H1 (cell line): ENCODE measurements at regions of chr6 and their contacts with region 1.

Region 1: GRCh38 chr6:85678602-85679444 is 36.1 kb upstream of the SYNCRIP start:
- DNase-seq: peak; percentile 97 to 100
- H3K4me3 ChIP-seq: peak overlapping the region; percentile 90 to 100 (median 96)
- H3K27ac ChIP-seq: peak overlapping the region; percentile 97
- H3K4me1 ChIP-seq: peaks cover 0 to 12% (median 2%) of the 10 kb centered on the region in 4 experiments; a peak in 2 of 7 replicates
- H3K27me3 ChIP-seq: no peaks in the 10 kb centered on the region
- CTCF ChIP-seq: no peak
- EP300 ChIP-seq: no peak; a peak in 1 of 3 replicates
- POLR2A ChIP-seq: peak; percentile 100
- RAD21 ChIP-seq: no peak

Region 2: GRCh38 chr6:85449818-85450759 is 228.7 kb before region 1 on chr6 and contains the start of gene NT5E:
- CTCF ChIA-PET with region 1: no interaction called
- POLR2A ChIA-PET with region 1: interaction called, 16 read pairs
- DNase-seq: peak in 1 of 2 experiments; percentile 89
- H3K4me3 ChIP-seq: peak within 1 kb of the TSS; percentile 65 to 80 (median 69)
- H3K27ac ChIP-seq: no peak within 1 kb of the TSS
- H3K4me1 ChIP-seq: no peaks in the 10 kb centered on the region; a peak in 1 of 7 replicates
- H3K27me3 ChIP-seq: peaks cover 10 to 49% (median 40%) of the 10 kb centered on the region in 4 experiments
- CTCF ChIP-seq: peak in 1 of 3 experiments; percentile 7; a peak in 1 of 4 replicates
- EP300 ChIP-seq: no peak
- POLR2A ChIP-seq: peak in 1 of 2 experiments; percentile 49; a peak in 1 of 3 replicates
- RAD21 ChIP-seq: no peak
- total RNA-seq, gene NT5E: 1.1 and 1.5 TPM in 2 replicates

Region 3: GRCh38 chr6:85600713-85601313 is 78.0 kb before region 1 on chr6:
- CTCF ChIA-PET with region 1: no interaction called
- POLR2A ChIA-PET with region 1: interaction called, 55 read pairs
- DNase-seq: no peak
- H3K4me3 ChIP-seq: no peak overlapping the region
- H3K27ac ChIP-seq: no peak overlapping the region
- H3K4me1 ChIP-seq: no peaks in the 10 kb centered on the region
- H3K27me3 ChIP-seq: no peaks in the 10 kb centered on the region
- CTCF ChIP-seq: no peak
- EP300 ChIP-seq: no peak
- POLR2A ChIP-seq: no peak
- RAD21 ChIP-seq: no peak

Region 4: DNA sequence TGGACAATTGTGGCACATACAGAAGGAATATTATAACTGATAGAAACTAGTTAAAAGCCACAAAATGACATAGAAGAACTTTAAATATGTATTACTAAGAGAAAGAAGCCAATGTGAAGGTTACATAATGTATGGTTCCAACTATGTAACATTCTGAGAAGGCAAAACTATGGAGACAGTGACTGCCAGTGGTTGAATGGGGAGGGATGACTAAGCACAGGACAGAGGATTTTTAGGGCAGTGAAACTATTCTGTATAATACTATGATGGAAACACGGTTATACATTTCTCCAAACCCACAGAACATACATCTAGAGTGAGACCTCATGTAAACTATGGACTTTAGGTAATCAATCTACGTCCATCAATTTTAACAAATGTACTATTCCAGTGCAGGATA is 58.5 kb before region 1 on chr6:
- CTCF ChIA-PET with region 1: no interaction called
- POLR2A ChIA-PET with region 1: interaction called, 890 read pairs
- DNase-seq: no peak
- H3K4me3 ChIP-seq: no peak overlapping the region
- H3K27ac ChIP-seq: no peak overlapping the region
- H3K4me1 ChIP-seq: no peaks in the 10 kb centered on the region
- H3K27me3 ChIP-seq: no peaks in the 10 kb centered on the region
- CTCF ChIP-seq: no peak
- EP300 ChIP-seq: no peak
- POLR2A ChIP-seq: no peak
- RAD21 ChIP-seq: no peak

Region 5: GRCh38 chr6:85660181-85660611 is 18.6 kb before region 1 on chr6:
- CTCF ChIA-PET with region 1: no interaction called
- POLR2A ChIA-PET with region 1: interaction called, 339 read pairs
- DNase-seq: no peak
- H3K4me3 ChIP-seq: no peak overlapping the region
- H3K27ac ChIP-seq: no peak overlapping the region
- H3K4me1 ChIP-seq: 0 out of 7 replicates have a peak, but pooled peaks cover 0 to 4% (median 0%) of the 10 kb centered on the region in 4 experiments
- H3K27me3 ChIP-seq: no peaks in the 10 kb centered on the region
- CTCF ChIP-seq: no peak
- EP300 ChIP-seq: no peak
- POLR2A ChIP-seq: no peak
- RAD21 ChIP-seq: peak; percentile 29 to 30; a peak in 2 of 4 replicates

Region 6: GRCh38 chr6:85703406-85703805 is 24.6 kb after region 1 on chr6:
- CTCF ChIA-PET with region 1: no interaction called
- POLR2A ChIA-PET with region 1: interaction called, 17 read pairs
- DNase-seq: no peak
- H3K4me3 ChIP-seq: no peak overlapping the region
- H3K27ac ChIP-seq: no peak overlapping the region
- H3K4me1 ChIP-seq: no peaks in the 10 kb centered on the region
- H3K27me3 ChIP-seq: no peaks in the 10 kb centered on the region
- CTCF ChIP-seq: no peak
- EP300 ChIP-seq: no peak
- POLR2A ChIP-seq: no peak
- RAD21 ChIP-seq: no peak